Activated B cell treated with CpG ODN at 0.5 μM for 24 hours (primary cell): ENCODE measurements at regions of chr1 and their contacts with region 1.

Region 1: GRCh38 chr1:54406339-54407153 is at the start of gene SSBP3:
- DNase-seq: peak; percentile 95
- ATAC-seq: peak; percentile 93
- H3K4me3 Mint-ChIP-seq: peak within 1 kb of the TSS; percentile 91
- H3K27ac Mint-ChIP-seq: peak within 1 kb of the TSS; percentile 89
- H3K4me1 Mint-ChIP-seq: peaks cover 49% of the 10 kb centered on the region
- H3K27me3 Mint-ChIP-seq: no peaks in the 10 kb centered on the region
- CTCF ChIP-seq: no peak
- total RNA-seq, gene SSBP3: 23.1 and 29.7 TPM in 2 replicates

Region 2: DNA sequence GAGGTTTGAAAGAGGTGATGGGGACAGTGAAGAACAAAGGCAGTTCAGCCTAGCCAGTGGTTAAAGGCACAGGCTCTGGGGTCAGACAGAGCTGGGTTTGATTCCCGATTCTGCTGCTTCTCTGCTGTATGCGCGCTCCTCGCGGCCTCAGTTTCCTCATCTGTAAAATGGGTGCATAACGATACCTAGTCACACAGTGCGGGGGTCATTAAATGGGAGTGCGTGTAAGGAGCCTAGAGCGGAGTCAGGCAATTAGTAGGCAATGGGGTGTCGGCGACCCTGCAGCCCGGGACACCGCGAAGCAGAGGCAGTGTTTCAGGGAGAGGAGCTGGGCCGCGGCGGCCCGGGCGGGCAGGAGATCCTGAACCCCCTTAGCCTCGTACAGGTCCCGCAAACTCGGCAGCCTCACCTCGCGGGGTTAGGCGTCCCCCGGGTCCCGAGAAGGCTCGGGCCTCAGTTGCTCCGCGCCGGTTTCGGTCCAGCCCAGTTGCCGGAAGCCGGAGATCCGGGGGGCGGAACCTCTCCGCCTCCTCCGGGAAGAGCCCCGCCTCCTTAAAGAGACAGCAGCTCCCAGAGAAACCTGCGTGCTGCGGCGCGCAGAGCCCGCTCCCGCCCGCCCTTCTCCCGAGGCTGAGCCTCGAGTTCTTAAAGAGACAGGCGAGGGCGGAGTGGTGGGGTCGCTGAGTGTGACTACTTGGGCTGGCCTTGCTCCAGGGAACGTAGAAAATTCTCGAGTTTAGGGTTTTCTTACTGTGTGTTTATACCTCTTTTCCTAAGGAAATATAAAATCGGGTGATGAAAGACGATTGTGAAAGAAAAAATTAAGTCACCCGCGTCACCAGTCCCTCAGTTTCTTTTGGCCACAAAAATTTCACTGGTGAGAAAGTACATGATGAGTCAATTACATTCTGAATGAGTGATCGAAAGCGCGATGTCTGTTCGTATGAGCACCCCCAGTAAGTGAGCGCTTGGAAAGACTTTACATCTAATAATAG is 516.9 kb before region 1 on chr1 and contains the start of gene YIPF1:
- CTCF ChIA-PET with region 1: no interaction called
- POLR2A ChIA-PET with region 1: no interaction called
- intact Hi-C with region 1: loop called (anchors 5 kb)
- DNase-seq: peak; percentile 81
- ATAC-seq: peak; percentile 98
- H3K4me3 Mint-ChIP-seq: peak within 1 kb of the TSS; percentile 98
- H3K27ac Mint-ChIP-seq: peak within 1 kb of the TSS; percentile 94
- H3K4me1 Mint-ChIP-seq: peaks cover 40% of the 10 kb centered on the region
- H3K27me3 Mint-ChIP-seq: no peaks in the 10 kb centered on the region
- CTCF ChIP-seq: no peak
- total RNA-seq, gene YIPF1: 16.6 and 18.5 TPM in 2 replicates

Region 3: DNA sequence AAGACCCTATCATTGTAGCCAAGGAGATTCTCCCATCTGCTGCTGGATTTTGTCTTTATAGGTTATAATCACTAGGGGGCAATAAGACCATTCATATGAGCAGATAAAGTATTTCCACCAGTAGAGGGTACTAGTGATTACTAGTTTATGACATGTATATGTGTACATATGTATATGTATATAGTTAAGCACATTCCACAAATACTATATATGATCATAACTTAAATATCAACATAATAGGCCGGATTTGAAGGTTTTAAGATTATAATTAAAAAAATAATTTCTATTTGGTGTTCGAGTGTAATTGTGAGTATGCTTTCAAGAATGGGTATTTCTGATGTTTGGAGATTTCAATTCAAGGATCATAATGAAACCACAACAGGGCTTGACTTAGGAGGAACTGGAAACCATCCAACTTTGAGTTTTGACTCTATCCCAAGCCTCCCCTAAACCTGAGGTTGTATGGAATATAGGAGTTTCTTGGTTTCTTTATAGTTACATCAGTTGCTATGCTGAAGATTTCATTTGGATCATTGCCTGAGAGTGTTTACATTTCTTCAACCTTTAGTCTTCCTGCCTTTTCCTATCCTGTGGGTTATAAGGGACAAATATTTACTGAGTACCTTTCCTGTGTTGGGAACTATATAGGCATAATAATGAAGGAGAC is 336.2 kb before region 1 on chr1:
- CTCF ChIA-PET with region 1: interaction called, 7 read pairs
- POLR2A ChIA-PET with region 1: interaction called, 3 read pairs
- intact Hi-C with region 1: loop called (anchors 1 kb)
- DNase-seq: no peak
- ATAC-seq: peak; percentile 95
- H3K4me3 Mint-ChIP-seq: no peak overlapping the region
- H3K27ac Mint-ChIP-seq: no peak overlapping the region
- H3K4me1 Mint-ChIP-seq: no peaks in the 10 kb centered on the region
- H3K27me3 Mint-ChIP-seq: no peaks in the 10 kb centered on the region
- CTCF ChIP-seq: peak; percentile 88

Region 4: GRCh38 chr1:54310439-54311328 is 95.9 kb before region 1 on chr1:
- CTCF ChIA-PET with region 1: interaction called, 4 read pairs
- POLR2A ChIA-PET with region 1: interaction called, 6 read pairs
- intact Hi-C with region 1: loop called (anchors 1 kb)
- DNase-seq: no peak
- ATAC-seq: peak; percentile 34
- H3K4me3 Mint-ChIP-seq: no peak overlapping the region
- H3K27ac Mint-ChIP-seq: no peak overlapping the region
- H3K4me1 Mint-ChIP-seq: no peaks in the 10 kb centered on the region
- H3K27me3 Mint-ChIP-seq: no peaks in the 10 kb centered on the region
- CTCF ChIP-seq: no peak

Region 5: GRCh38 chr1:54488779-54489626 is 82.5 kb after region 1 on chr1:
- CTCF ChIA-PET with region 1: interaction called, 37 read pairs
- POLR2A ChIA-PET with region 1: interaction called, 108 read pairs
- intact Hi-C with region 1: loop called (anchors 1 kb)
- DNase-seq: peak; percentile 82
- ATAC-seq: peak; percentile 70
- H3K4me3 Mint-ChIP-seq: peak overlapping the region; percentile 89
- H3K27ac Mint-ChIP-seq: peak overlapping the region; percentile 70
- H3K4me1 Mint-ChIP-seq: peaks cover 26% of the 10 kb centered on the region
- H3K27me3 Mint-ChIP-seq: peaks cover 12% of the 10 kb centered on the region
- CTCF ChIP-seq: no peak

Region 6: DNA sequence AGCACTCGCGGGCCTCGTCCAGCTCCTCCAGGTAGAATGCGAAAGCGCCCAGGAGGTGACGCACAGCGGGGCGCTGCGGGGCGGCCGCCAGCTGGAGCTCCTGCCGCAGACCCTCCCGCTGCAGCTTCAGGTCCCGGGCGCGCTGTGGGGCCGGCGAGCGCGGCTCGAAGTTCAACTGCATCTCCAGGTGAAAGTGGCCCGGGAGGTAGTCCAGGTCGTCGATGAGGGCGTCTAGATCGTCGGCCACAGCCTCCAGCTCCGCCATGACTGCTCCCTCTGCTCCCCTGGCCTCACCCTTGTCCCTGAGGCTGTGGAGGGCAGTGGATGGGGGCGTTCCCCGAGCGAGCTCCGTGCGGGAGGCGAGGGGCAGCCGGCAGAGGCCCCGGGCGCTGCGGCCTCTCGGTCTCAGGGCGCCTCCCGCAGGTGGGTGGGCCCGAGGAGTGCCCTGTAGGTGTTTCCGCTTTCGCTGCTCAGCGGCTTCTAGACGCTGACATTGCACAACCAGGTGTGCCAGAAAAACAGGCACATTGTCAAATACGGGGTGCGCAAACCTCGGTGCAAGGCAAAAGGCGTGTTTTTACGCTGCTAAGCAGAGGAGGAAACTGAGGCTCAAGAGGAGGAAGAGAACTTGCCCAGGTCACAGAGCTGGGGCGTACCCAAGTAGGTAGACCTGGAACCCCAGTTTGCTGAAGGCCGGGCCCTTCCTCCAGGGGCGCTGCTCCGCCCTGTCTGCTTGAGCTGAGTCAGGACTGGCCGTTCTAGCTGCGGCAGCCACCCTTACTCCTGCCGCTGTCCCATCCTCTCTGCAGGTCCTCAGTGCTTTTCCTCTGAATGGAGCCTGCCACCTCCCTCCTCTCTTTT is 394.6 kb after region 1 on chr1 and contains the start of gene TTC22:
- CTCF ChIA-PET with region 1: no interaction called
- POLR2A ChIA-PET with region 1: interaction called, 5 read pairs
- intact Hi-C with region 1: loop called (anchors 2 kb)
- DNase-seq: peak; percentile 67
- ATAC-seq: peak; percentile 90
- H3K4me3 Mint-ChIP-seq: peak within 1 kb of the TSS; percentile 90
- H3K27ac Mint-ChIP-seq: peak within 1 kb of the TSS; percentile 83
- H3K4me1 Mint-ChIP-seq: peaks cover 29% of the 10 kb centered on the region
- H3K27me3 Mint-ChIP-seq: no peaks in the 10 kb centered on the region
- CTCF ChIP-seq: no peak
- total RNA-seq, gene TTC22: 4.9 and 6.0 TPM in 2 replicates